ENCODE measurements at regions of chr2 and their contacts with region 1.

Region 1: DNA sequence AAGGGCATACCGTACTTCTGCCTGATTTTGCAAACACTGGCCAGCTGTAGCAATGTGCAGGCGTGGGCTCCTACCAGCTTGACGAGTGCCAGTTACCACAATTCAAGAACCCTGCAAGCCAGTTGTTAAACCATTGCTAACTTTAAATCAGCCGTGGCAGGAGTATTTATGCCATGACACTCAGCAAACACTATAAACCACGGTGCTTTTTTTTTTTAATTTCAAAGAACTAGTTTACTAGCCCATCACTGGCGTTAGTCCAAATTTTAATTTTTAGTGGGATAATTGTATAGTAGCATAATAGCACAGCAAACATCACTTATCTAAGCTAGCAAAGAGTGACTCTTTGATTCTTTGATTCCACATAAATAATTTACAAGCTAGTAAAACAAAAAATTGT is 111.1 kb downstream of the COL4A4 start:
- DNase-seq: no peak
- ATAC-seq: no peak
- H3K4me3 ChIP-seq: no peak overlapping the region
- H3K4me3 Mint-ChIP-seq: no peak overlapping the region
- H3K27ac ChIP-seq: no peak overlapping the region
- H3K27ac Mint-ChIP-seq: no peak overlapping the region
- H3K4me1 ChIP-seq: no peaks in the 10 kb centered on the region
- H3K4me1 Mint-ChIP-seq: no peaks in the 10 kb centered on the region
- H3K27me3 ChIP-seq: peaks cover 0 to 3% of the 10 kb centered on the region in 2 experiments
- H3K27me3 Mint-ChIP-seq: peaks cover 0 to 6% of the 10 kb centered on the region in 2 donors

Region 2: DNA sequence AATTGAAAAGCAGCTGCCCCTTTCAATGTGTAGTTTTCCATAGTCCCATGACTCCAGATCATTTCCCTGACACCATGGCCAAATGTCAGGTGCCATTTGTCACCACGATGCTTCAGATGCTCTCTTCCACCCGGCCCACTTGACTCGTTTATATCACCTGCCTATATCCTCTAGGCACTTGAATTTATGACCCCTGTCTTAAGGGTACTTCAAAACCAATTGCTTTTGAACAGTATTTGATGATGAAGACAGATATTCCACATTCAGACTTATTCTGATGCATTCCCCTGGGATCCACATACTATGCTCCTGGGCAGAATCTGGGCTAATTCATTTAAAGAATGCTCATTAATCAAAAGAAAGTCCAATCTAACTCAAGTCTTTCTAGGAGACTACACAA is 233.9 kb before region 1 on chr2:
- CTCF ChIA-PET with region 1: no interaction called
- POLR2A ChIA-PET with region 1: interaction called in 1 of 2 experiments, 13 read pairs
- DNase-seq: no peak
- ATAC-seq: no peak
- H3K4me3 ChIP-seq: no peak overlapping the region
- H3K4me3 Mint-ChIP-seq: no peak overlapping the region
- H3K27ac ChIP-seq: no peak overlapping the region
- H3K27ac Mint-ChIP-seq: no peak overlapping the region
- H3K4me1 ChIP-seq: no peaks in the 10 kb centered on the region
- H3K4me1 Mint-ChIP-seq: no peaks in the 10 kb centered on the region
- H3K27me3 ChIP-seq: peaks cover 2 to 3% of the 10 kb centered on the region in 2 experiments
- H3K27me3 Mint-ChIP-seq: peaks cover 4 to 15% of the 10 kb centered on the region in 2 donors

Region 3: DNA sequence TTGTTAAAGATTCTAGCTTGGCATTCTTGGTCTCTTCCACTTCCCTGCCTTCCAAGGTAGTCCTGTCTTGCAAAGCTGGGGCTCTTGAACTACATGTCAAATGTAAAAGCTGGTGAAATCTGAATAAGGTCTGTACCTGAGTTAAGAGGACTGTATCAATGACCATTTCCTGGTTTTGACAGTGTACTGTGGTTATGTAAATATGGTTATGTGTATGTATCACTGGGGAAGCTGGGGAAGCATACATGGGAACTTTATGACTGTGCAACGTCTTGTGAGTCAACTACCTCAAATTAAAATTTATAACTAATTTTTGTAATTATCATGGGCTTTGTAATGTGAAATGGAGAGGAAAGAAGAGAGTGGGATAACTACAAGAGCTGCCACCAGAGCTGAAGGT is 29.4 kb after region 1 on chr2:
- CTCF ChIA-PET with region 1: no interaction called
- POLR2A ChIA-PET with region 1: no interaction called
- DNase-seq: no peak
- ATAC-seq: no peak
- H3K4me3 ChIP-seq: no peak overlapping the region
- H3K4me3 Mint-ChIP-seq: no peak overlapping the region
- H3K27ac ChIP-seq: no peak overlapping the region
- H3K27ac Mint-ChIP-seq: no peak overlapping the region
- H3K4me1 ChIP-seq: no peaks in the 10 kb centered on the region
- H3K4me1 Mint-ChIP-seq: no peaks in the 10 kb centered on the region
- H3K27me3 ChIP-seq: peaks cover 0 to 14% of the 10 kb centered on the region in 2 experiments
- H3K27me3 Mint-ChIP-seq: peaks cover 6 to 9% of the 10 kb centered on the region in 2 donors

Region 4: DNA sequence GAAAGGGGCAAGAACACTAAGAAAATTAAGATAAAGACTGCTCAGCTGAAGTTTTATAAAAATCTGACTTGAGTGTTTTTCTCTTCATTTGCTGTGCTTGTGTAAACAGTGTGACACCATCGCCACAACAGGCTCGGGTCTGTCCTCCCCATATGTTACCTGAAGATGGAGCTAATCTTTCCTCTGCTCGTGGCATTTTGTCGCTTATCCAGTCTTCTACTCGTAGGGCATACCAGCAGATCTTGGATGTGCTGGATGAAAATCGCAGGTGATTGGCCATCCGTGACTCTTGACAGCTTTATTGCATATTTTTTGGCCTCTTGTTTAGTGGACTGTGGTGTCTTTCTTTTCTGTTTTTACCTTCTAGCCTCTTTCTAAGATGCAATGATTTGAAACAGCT is 294.2 kb after region 1 on chr2:
- CTCF ChIA-PET with region 1: no interaction called
- POLR2A ChIA-PET with region 1: no interaction called
- DNase-seq: no peak
- ATAC-seq: no peak
- H3K4me3 ChIP-seq: no peak overlapping the region
- H3K4me3 Mint-ChIP-seq: no peak overlapping the region
- H3K27ac ChIP-seq: no peak overlapping the region
- H3K27ac Mint-ChIP-seq: no peak overlapping the region
- H3K4me1 ChIP-seq: no peaks in the 10 kb centered on the region
- H3K4me1 Mint-ChIP-seq: no peaks in the 10 kb centered on the region
- H3K27me3 ChIP-seq: no peaks in the 10 kb centered on the region
- H3K27me3 Mint-ChIP-seq: no peaks in the 10 kb centered on the region

Measured in T-cell (primary cell).